Adrenal gland (tissue), 19 donors: ENCODE measurements at regions of chr10 and their contacts with region 1.

Region 1: GRCh38 chr10:99973190-99973589 is 36.6 kb downstream of the DNMBP start:
- DNase-seq: no peak
- H3K4me3 ChIP-seq: no peak overlapping the region
- H3K27ac ChIP-seq: no peak overlapping the region
- H3K4me1 ChIP-seq: peaks cover 18 to 36% of the 10 kb centered on the region in 2 donors
- H3K27me3 ChIP-seq: no peaks in the 10 kb centered on the region
- CTCF ChIP-seq: peak in 5 of 6 experiments; percentile 8 to 52 (median 20)
- POLR2A ChIP-seq: no peak

Region 2: GRCh38 chr10:100009793-100010676 is 36.8 kb after region 1 on chr10 and contains the start of gene DNMBP:
- intact Hi-C with region 1: loop called in 1 of 2 experiments (anchors 5 kb)
- DNase-seq: peak; percentile 79 to 87 (median 84)
- H3K4me3 ChIP-seq: peak within 1 kb of the TSS in 2 of 4 donors; percentile 50 to 91
- H3K27ac ChIP-seq: peak within 1 kb of the TSS in 4 of 5 donors; percentile 20 to 92 (median 78)
- H3K4me1 ChIP-seq: peaks cover 31 to 40% of the 10 kb centered on the region in 2 donors
- H3K27me3 ChIP-seq: no peaks in the 10 kb centered on the region
- CTCF ChIP-seq: peak in 5 of 6 experiments; percentile 11 to 87 (median 51)
- POLR2A ChIP-seq: peak; percentile 51 to 53
- total RNA-seq, gene DNMBP: 8.9 to 17.9 (median 12.1) TPM